Common myeloid progenitor, CD34-positive (primary cell): ENCODE measurements at regions of chr12 and their contacts with region 1.

Region 1: DNA sequence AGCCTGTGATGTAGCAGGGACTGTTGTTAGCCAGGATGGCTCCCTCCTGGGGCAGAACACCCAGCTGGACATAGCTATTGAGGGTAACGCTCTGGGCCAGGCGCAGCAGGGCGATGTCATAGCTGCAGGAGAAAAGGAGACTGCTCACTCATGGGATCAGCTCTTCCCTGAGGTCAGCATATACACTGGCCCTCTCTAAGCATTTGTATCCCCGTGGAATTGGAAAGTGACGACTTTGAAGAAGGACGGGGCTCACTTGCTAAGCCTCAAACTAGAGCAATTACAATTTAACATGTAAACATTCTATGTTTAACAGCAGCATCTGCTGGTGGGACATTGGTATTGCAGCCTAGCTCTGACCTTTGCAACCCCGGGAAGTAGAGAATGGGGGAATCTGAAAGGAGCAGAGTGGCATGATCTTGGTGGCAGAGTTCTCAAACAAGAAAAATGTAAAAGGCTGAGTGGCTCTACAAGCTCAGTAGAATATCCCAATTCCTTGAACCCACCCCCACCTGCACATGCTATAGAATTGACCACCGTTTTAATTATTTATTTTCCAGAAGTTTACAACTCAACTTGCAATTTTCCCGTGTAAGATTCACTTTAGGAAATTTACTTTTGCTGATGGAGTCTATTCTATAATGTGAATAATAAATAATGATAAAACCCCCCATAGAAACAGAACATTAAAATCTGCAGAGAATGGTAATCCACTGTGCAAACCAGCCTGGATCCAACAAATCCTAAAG is 5.0 kb downstream of the CELA1 start:
- DNase-seq: peak; percentile 75 to 87 (median 80)
- H3K4me3 ChIP-seq: peak overlapping the region in 3 of 7 experiments; percentile 35 to 68 (median 37)
- H3K27ac ChIP-seq: no peak overlapping the region
- H3K4me1 ChIP-seq: peaks cover 7 to 19% (median 16%) of the 10 kb centered on the region in 4 experiments
- H3K27me3 ChIP-seq: no peaks in the 10 kb centered on the region

Region 2: DNA sequence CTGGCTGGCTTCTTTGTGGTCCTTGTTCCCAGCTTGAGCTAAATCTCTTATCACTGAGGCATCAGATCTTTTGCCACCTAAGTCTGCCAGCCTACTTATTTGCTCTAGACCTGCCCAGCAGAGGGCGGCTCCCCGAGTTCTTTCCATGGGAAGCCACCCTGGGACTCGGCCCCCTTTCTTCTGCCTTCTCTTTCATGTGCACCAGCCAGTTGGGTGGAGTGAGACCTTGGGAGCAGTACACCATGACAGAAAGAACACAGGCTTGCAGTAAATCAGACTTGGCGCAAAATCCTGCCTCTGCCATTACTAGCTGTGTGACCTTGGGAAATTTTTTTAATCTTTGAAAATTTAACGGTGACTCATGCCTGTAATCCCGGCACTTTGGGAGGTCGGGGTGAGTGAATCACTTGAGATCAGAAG is 78.7 kb before region 1 on chr12:
- CTCF ChIA-PET with region 1: interaction called, 38 read pairs
- POLR2A ChIA-PET with region 1: no interaction called
- DNase-seq: peak; percentile 65 to 76 (median 68)
- H3K4me3 ChIP-seq: no peak overlapping the region
- H3K27ac ChIP-seq: no peak overlapping the region
- H3K4me1 ChIP-seq: peaks cover 0 to 2% (median 0%) of the 10 kb centered on the region in 4 experiments
- H3K27me3 ChIP-seq: no peaks in the 10 kb centered on the region

Region 3: DNA sequence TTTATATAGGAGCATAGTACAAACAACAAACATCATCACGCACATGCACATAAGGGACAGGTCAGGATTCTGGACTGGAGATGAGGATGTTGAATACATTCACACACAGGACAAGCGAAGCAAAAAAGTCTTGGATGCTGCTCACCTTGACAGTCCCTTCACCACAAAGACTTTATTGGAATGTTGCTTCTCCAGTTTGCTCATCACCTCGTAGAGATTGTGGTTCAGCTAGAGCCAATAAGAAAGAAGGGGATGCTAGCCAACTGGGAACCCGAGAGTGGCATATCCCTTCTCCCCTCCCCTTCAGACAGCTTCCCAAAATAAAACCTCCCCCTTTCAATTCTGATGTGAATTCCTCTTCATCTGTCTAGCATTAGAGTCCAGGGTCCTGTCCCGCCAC is 45.8 kb before region 1 on chr12:
- CTCF ChIA-PET with region 1: interaction called, 666 read pairs
- POLR2A ChIA-PET with region 1: no interaction called
- DNase-seq: no peak
- H3K4me3 ChIP-seq: no peak overlapping the region
- H3K27ac ChIP-seq: no peak overlapping the region
- H3K4me1 ChIP-seq: no peaks in the 10 kb centered on the region
- H3K27me3 ChIP-seq: no peaks in the 10 kb centered on the region

Region 4: DNA sequence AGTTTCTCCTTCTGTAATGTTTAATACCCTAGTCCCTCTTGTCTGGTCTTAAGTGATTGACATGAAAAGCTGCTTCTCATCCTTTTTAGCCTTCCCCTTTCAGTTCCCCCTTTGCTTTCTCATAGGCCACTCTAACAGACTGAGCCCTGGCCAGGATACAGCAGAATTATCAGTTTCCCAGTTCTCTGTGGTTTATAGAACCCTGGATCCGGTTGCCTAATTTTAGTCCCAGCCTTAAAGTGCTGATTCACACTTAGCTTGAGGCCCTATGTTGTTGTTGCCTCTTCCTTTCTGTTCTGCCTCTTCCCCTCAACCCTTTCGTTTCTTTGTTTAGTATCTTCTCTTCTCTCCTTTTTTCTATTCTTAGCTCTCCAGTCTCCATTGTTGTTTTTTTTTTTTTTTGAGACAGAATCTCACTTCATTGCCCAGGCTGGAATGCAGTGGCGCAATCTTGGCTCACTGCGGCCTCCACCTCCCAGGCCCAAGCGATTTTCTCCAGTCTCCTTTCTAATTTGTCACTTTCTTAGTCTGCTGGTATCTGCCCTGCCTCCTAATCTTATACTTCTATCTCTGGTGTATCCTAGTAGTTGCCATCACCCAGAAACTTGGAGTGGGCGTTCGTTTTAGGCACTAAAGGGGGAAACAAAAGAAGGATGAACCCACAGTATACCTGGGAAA is 14.5 kb before region 1 on chr12:
- CTCF ChIA-PET with region 1: interaction called, 666 read pairs
- POLR2A ChIA-PET with region 1: interaction called, 4 read pairs
- DNase-seq: peak; percentile 87 to 94 (median 93)
- H3K4me3 ChIP-seq: peak overlapping the region in 5 of 7 experiments; percentile 32 to 57 (median 43)
- H3K27ac ChIP-seq: peak overlapping the region; percentile 75 to 88
- H3K4me1 ChIP-seq: peaks cover 55 to 84% (median 82%) of the 10 kb centered on the region in 4 experiments
- H3K27me3 ChIP-seq: no peaks in the 10 kb centered on the region